A549 (cell line): ENCODE measurements at regions of chr17 and their contacts with region 1.

Region 1: DNA sequence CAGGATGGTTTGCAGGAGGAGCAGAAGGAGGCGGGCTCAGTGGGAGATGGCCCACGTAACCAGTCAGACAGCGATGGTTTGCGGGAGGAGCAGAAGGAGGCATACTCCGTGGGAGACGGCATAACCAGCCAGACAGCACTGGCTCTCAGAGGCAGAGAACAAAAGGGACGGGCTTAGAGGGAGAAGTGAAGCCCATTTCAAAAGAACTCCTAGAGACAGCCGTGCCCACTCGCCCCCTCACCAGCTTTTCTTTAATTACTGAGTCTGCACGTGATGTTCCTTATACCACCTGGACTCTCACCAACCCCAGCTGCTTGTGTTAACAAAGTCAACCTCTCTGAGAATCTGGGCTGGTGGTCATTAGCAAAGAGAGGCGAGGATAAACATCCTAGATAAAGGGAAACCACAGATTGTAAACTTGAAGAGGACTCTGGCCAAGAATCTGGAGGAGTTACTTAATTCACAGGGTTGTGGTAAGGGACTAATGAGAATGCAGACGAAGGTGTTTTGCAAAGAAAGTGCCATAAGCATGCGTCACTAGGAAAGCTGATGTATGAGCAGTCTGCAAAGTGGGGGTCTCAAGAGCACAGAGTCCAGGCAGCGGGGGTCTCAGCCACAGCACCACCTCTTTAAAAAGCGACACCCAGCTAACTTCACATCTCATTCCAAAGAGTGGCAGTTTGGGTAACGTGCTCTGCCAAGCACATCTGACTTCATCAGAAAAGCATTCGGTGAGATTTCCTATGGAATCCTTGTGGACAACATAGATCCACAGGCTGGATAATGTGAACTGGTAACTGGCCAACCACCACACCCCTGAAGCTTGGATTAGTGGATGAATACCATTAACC is 51.7 kb downstream of the NXN start:
- DNase-seq: peak; percentile 69 to 72
- ATAC-seq: peak; percentile 78 to 80
- H3K4me3 ChIP-seq: no peak overlapping the region
- H3K27ac ChIP-seq: peak overlapping the region; percentile 51 to 69
- H3K4me1 ChIP-seq: peaks cover 53% of the 10 kb centered on the region
- CTCF ChIP-seq: no peak
- EP300 ChIP-seq: peak in 1 of 2 experiments; percentile 81; a peak in 2 of 5 replicates
- POLR2A ChIP-seq: no peak
- RAD21 ChIP-seq: no peak; a peak in 1 of 5 replicates

Region 2: DNA sequence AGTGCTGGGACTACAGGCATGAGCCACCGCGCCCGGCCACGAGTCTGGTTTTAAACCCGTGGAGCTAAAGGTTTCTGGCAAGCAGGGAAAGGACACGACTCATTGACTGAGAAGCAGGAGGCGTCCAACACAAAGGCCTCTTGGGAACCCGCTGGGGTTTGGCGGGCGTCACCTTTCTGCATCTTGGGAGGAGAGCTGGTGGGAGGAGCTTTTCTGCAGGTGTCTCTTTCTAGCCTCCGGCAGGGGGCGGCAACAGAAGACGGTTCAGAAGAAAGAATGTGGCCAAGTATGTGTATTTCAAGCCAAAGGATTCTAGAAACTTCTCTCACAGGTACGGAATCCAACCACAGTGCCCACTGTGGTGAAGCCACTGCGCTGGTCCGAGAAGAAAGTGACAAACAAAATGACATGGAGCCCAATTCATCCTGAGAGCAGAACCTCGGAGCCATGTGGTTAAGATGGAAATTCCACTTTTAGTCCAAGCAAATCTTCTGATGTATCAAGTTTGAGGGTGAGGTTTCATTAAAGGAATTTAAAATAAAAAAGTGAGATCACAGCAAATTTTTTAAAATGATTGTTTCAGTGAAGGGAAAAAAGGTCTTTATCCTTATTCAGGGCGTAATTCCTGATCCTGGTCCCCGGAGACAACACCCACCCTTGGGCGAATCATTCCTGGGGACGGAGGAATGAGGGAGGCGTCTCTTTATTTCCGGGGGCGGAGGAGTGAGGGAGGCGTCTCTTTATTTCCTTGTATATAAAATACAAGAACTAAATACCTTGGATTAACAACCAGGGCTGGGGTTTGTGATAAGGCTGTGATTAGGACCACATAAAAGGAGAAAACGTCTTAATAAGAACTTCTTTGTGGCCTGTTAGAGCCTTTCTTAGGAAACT is 48.0 kb before region 1 on chr17:
- CTCF ChIA-PET with region 1: interaction called, 10 read pairs
- POLR2A ChIA-PET with region 1: interaction called, 3 read pairs
- DNase-seq: peak; percentile 67 to 85
- ATAC-seq: peak; percentile 80 to 81
- H3K4me3 ChIP-seq: no peak overlapping the region
- H3K27ac ChIP-seq: no peak overlapping the region
- H3K4me1 ChIP-seq: peaks cover 25% of the 10 kb centered on the region; the same call in 2 of the 3 replicates
- CTCF ChIP-seq: peak; percentile 57
- EP300 ChIP-seq: no peak
- POLR2A ChIP-seq: no peak
- RAD21 ChIP-seq: peak; percentile 64 to 66

Region 3: DNA sequence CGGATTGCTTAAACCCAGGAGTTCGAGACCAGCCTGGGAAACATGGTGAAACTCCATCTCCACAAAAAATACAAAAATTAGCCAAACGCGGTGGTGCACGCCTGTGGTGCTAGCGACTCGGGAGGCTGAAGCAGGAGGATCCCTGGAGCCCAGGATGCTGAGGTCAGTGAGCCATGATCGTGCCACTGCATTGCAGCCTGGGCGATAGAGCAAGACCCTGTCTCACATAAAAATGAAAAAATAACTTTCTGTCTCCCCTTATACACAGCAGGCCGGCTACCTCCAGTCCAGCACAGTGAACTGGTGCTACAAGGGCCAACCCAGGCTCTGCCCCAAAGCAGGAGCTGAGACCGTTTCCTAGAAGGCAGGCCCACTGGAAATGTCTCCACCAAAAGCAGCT is 412.5 kb after region 1 on chr17:
- CTCF ChIA-PET with region 1: no interaction called
- POLR2A ChIA-PET with region 1: no interaction called
- DNase-seq: no peak
- ATAC-seq: peak; percentile 43 to 52; a peak in 5 of 6 replicates
- H3K4me3 ChIP-seq: no peak overlapping the region
- H3K27ac ChIP-seq: no peak overlapping the region
- H3K4me1 ChIP-seq: no peaks in the 10 kb centered on the region
- CTCF ChIP-seq: no peak
- EP300 ChIP-seq: no peak
- POLR2A ChIP-seq: no peak
- RAD21 ChIP-seq: no peak